CD8-positive, alpha-beta T cell (primary cell): ENCODE measurements at regions of chr1 and their contacts with region 1.

Region 1: DNA sequence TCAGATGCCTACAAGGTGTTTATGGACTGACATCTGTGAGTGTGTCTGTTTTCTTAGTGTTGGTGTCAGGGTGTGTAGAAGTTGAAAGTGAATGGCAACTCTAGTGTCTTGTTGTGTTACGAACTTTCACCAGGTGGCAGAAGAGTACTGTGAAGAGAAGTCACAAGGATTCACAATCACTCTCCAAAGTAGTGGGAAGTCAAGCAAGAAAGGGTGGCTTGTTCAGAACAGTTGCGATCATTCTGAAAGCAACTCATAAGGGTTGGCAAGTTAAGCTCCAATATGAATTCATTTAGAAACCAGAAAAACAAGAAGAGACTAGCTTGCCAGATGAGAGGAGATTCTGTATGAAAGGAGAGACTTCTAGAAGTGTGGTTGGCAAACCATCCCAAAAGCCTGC is 86.1 kb downstream of the FASLG start:
- DNase-seq: peak in 6 of 9 experiments; percentile 25 to 79 (median 27)
- ATAC-seq: peak; percentile 62
- H3K4me3 ChIP-seq: no peak overlapping the region
- H3K4me3 Mint-ChIP-seq: no peak overlapping the region
- H3K27ac ChIP-seq: no peak overlapping the region
- H3K27ac Mint-ChIP-seq: peak overlapping the region; percentile 16
- H3K4me1 ChIP-seq: peaks cover 32% of the 10 kb centered on the region
- H3K4me1 Mint-ChIP-seq: peaks cover 45% of the 10 kb centered on the region
- H3K27me3 ChIP-seq: peaks cover 0 to 3% of the 10 kb centered on the region in 2 experiments
- H3K27me3 Mint-ChIP-seq: peaks cover 7% of the 10 kb centered on the region
- CTCF ChIP-seq: peak; percentile 78

Region 2: DNA sequence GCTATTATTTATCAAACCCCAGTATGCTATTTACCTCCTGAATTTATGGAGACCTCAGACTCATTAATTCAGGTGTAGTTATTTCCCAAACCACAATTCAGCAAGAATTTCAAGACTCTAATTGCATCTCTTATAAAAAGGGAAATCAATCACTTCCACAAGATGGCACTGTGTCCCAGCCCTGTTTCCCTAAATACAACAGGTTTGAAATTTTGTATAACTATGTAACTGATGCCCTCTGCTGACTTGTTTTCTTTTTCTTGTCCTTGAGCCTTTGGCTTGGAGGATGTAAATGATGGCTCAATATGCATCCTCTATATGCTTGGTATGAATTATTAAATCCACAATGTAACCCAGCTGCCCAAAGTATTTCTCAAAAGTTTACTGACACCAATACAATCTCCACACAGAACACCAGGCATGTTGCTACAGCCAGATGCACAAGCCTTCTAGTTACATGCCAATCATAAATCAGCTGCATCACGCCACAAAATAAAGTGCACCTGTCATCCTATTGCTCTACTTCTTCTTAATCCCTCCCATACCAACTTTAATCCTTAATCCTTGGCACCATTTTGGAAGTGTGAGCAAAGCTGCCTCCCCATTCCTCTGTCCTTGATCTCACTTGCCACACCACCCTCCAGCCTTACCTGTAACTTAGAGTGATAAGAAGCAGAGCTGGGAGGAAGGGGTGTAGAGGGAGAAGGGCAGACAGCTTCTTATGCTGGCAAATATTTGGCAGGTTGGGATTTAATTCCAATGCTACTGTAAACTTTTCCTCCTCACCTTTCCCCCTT is 315.5 kb before region 1 on chr1:
- CTCF ChIA-PET with region 1: no interaction called
- POLR2A ChIA-PET with region 1: no interaction called
- intact Hi-C with region 1: no loop called
- DNase-seq: peak in 6 of 9 experiments; percentile 22 to 80 (median 47)
- ATAC-seq: peak; percentile 75
- H3K4me3 ChIP-seq: no peak overlapping the region
- H3K4me3 Mint-ChIP-seq: no peak overlapping the region
- H3K27ac ChIP-seq: no peak overlapping the region
- H3K27ac Mint-ChIP-seq: peak overlapping the region; percentile 7
- H3K4me1 ChIP-seq: peaks cover 51% of the 10 kb centered on the region
- H3K4me1 Mint-ChIP-seq: peaks cover 49% of the 10 kb centered on the region
- H3K27me3 ChIP-seq: no peaks in the 10 kb centered on the region
- H3K27me3 Mint-ChIP-seq: no peaks in the 10 kb centered on the region
- CTCF ChIP-seq: peak; percentile 82

Region 3: GRCh38 chr1:172443626-172444453 is 301.2 kb before region 1 on chr1 and contains the start of gene PIGC:
- CTCF ChIA-PET with region 1: no interaction called
- POLR2A ChIA-PET with region 1: no interaction called
- intact Hi-C with region 1: no loop called
- DNase-seq: peak; percentile 83 to 94 (median 93)
- ATAC-seq: peak; percentile 99
- H3K4me3 ChIP-seq: peak within 1 kb of the TSS; percentile 78 to 90
- H3K4me3 Mint-ChIP-seq: peak within 1 kb of the TSS; percentile 96
- H3K27ac ChIP-seq: peak within 1 kb of the TSS; percentile 71 to 83
- H3K27ac Mint-ChIP-seq: peak within 1 kb of the TSS; percentile 95
- H3K4me1 ChIP-seq: peaks cover 25% of the 10 kb centered on the region
- H3K4me1 Mint-ChIP-seq: peaks cover 45% of the 10 kb centered on the region
- H3K27me3 ChIP-seq: no peaks in the 10 kb centered on the region
- H3K27me3 Mint-ChIP-seq: no peaks in the 10 kb centered on the region
- CTCF ChIP-seq: peak; percentile 77
- total RNA-seq, gene PIGC: 22.1 to 23.2 TPM

Region 4: GRCh38 chr1:172761581-172762025 is 16.6 kb after region 1 on chr1:
- CTCF ChIA-PET with region 1: interaction called, 78 read pairs
- POLR2A ChIA-PET with region 1: interaction called, 3 read pairs
- intact Hi-C with region 1: no loop called
- DNase-seq: no peak
- ATAC-seq: no peak
- H3K4me3 ChIP-seq: no peak overlapping the region
- H3K4me3 Mint-ChIP-seq: no peak overlapping the region
- H3K27ac ChIP-seq: no peak overlapping the region
- H3K27ac Mint-ChIP-seq: no peak overlapping the region
- H3K4me1 ChIP-seq: peaks cover 27% of the 10 kb centered on the region
- H3K4me1 Mint-ChIP-seq: peaks cover 35% of the 10 kb centered on the region
- H3K27me3 ChIP-seq: no peaks in the 10 kb centered on the region
- H3K27me3 Mint-ChIP-seq: no peaks in the 10 kb centered on the region
- CTCF ChIP-seq: no peak

Region 5: DNA sequence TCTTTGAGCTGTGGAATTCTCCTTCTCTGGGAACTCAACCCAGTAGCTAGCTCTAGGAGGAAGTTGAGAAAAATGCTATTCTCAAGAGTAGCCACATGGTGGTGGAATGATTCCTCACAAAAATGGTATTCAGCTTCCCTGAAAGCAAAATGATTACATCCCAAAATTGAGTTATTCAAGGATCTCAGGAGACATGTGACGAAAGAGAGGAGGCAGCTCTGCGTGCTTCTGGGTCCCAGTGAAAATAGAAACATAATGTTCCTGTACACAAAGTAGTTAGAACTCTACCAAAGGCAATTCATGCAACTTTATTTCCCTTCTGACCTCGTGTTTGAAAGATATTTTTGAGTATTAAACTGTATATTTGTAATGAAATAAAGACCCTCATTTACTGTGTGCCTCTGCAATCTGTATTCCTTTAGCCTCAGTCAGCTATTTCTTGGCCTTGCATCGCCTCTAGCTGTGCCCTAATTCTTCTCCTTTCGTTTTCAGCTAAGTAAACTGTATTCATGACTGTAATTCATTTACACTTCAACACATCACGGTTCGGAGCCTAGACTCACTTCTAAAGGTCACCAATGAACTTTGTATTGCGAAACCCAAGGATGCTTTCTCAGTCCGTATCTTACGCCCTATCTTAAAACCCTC is 81.2 kb after region 1 on chr1:
- CTCF ChIA-PET with region 1: interaction called, 30 read pairs
- POLR2A ChIA-PET with region 1: no interaction called
- intact Hi-C with region 1: loop called in 1 of 2 experiments (anchors 1 kb)
- DNase-seq: peak in 2 of 9 experiments; percentile 22 to 43
- ATAC-seq: peak; percentile 46
- H3K4me3 ChIP-seq: no peak overlapping the region
- H3K4me3 Mint-ChIP-seq: no peak overlapping the region
- H3K27ac ChIP-seq: peak overlapping the region in 1 of 2 experiments; percentile 30
- H3K27ac Mint-ChIP-seq: no peak overlapping the region
- H3K4me1 ChIP-seq: peaks cover 14% of the 10 kb centered on the region
- H3K4me1 Mint-ChIP-seq: peaks cover 2% of the 10 kb centered on the region
- H3K27me3 ChIP-seq: no peaks in the 10 kb centered on the region
- H3K27me3 Mint-ChIP-seq: no peaks in the 10 kb centered on the region
- CTCF ChIP-seq: peak; percentile 53

Region 6: DNA sequence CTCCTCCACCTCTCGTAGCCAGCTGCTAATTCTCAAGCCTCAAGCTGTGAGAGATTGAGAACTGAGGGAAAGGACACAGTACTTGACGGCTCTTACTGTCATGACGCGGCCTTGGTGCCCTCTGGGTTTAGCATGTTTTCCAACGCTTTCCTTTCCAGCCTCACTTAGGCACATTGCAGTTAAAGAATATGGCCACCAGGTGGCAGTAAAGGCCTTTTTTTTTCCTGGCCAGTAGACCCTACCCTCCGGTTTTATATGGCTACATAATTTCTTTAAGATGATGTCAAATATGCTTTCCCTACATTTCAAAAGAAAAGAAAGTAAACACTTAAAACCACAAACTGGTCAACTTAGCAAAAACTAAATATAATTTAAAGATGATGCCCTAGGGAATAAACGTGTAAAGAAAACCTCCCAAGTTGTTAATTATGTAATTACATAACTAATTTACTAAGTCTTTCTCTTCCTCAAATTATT is 675.4 kb after region 1 on chr1:
- CTCF ChIA-PET with region 1: interaction called, 74 read pairs
- POLR2A ChIA-PET with region 1: no interaction called
- intact Hi-C with region 1: loop called (anchors 1 kb)
- DNase-seq: peak; percentile 23 to 83 (median 52)
- ATAC-seq: peak; percentile 96
- H3K4me3 ChIP-seq: no peak overlapping the region
- H3K4me3 Mint-ChIP-seq: no peak overlapping the region
- H3K27ac ChIP-seq: no peak overlapping the region
- H3K27ac Mint-ChIP-seq: no peak overlapping the region
- H3K4me1 ChIP-seq: peaks cover 8% of the 10 kb centered on the region
- H3K4me1 Mint-ChIP-seq: peaks cover 7% of the 10 kb centered on the region
- H3K27me3 ChIP-seq: no peaks in the 10 kb centered on the region
- H3K27me3 Mint-ChIP-seq: no peaks in the 10 kb centered on the region
- CTCF ChIP-seq: peak; percentile 88

Region 7: DNA sequence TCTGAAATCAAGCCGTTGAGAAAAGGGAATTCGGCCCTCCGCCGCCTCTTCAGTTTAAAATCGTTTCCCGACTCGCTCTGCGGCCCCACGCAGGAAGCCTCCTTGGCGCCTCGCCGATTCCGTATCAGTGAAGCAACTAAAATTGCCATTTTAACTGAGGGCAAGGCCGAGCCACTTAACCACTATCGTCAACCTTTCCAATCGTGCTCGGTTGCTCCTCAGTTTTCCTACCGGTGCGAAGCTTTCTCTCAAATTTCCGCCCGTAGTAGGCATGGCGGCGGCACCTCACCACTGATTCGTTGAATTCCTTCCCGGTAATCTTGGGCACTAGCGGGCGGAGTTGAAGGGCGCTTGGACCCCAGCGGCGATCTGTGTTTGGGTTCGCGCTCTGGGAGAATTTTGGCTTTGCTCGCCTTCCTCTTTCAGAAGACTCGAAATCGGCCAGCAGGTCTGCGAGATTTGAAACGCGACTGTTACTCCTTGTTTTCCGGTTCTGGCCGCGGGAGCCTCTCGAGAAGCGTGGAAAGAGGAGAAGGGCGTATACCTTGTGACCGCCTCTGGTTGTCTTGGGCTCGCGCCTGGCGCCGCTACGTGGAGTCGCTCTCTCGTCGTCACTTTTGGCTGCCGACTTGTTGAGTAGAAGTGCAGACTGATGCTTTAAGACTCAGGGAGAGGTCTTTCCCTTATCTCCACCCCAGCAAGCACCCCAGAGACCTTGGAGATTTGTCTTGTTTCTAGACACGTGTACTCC is 1079.5 kb after region 1 on chr1 and contains the starts of genes CENPL and DARS2:
- CTCF ChIA-PET with region 1: interaction called, 4 read pairs
- POLR2A ChIA-PET with region 1: no interaction called
- intact Hi-C with region 1: loop called (anchors 1 kb)
- DNase-seq: peak; percentile 79 to 97 (median 90)
- ATAC-seq: peak; percentile 86
- H3K4me3 ChIP-seq: peak within 1 kb of the TSS; percentile 92 to 97
- H3K4me3 Mint-ChIP-seq: peak within 1 kb of the TSS; percentile 93
- H3K27ac ChIP-seq: peak within 1 kb of the TSS; percentile 78 to 87
- H3K27ac Mint-ChIP-seq: peak within 1 kb of the TSS; percentile 90
- H3K4me1 ChIP-seq: peaks cover 11% of the 10 kb centered on the region
- H3K4me1 Mint-ChIP-seq: peaks cover 54% of the 10 kb centered on the region
- H3K27me3 ChIP-seq: no peaks in the 10 kb centered on the region
- H3K27me3 Mint-ChIP-seq: no peaks in the 10 kb centered on the region
- CTCF ChIP-seq: no peak
- total RNA-seq, gene CENPL: 4.0 to 5.7 TPM
- total RNA-seq, gene DARS2: 1.5 to 1.6 TPM

Region 8: GRCh38 chr1:174217787-174218574 is 1473.0 kb after region 1 on chr1:
- CTCF ChIA-PET with region 1: interaction called, 4 read pairs
- POLR2A ChIA-PET with region 1: no interaction called
- intact Hi-C with region 1: loop called in 1 of 2 experiments (anchors 5 kb)
- DNase-seq: peak in 2 of 9 experiments; percentile 58 to 70
- ATAC-seq: peak; percentile 75
- H3K4me3 ChIP-seq: no peak overlapping the region
- H3K4me3 Mint-ChIP-seq: no peak overlapping the region
- H3K27ac ChIP-seq: no peak overlapping the region
- H3K27ac Mint-ChIP-seq: no peak overlapping the region
- H3K4me1 ChIP-seq: no peaks in the 10 kb centered on the region
- H3K4me1 Mint-ChIP-seq: peaks cover 3% of the 10 kb centered on the region
- H3K27me3 ChIP-seq: no peaks in the 10 kb centered on the region
- H3K27me3 Mint-ChIP-seq: no peaks in the 10 kb centered on the region
- CTCF ChIP-seq: peak; percentile 92